Ascending aorta (tissue), 2 donors: ENCODE measurements at regions of chr9 and their contacts with region 1.

Region 1: DNA sequence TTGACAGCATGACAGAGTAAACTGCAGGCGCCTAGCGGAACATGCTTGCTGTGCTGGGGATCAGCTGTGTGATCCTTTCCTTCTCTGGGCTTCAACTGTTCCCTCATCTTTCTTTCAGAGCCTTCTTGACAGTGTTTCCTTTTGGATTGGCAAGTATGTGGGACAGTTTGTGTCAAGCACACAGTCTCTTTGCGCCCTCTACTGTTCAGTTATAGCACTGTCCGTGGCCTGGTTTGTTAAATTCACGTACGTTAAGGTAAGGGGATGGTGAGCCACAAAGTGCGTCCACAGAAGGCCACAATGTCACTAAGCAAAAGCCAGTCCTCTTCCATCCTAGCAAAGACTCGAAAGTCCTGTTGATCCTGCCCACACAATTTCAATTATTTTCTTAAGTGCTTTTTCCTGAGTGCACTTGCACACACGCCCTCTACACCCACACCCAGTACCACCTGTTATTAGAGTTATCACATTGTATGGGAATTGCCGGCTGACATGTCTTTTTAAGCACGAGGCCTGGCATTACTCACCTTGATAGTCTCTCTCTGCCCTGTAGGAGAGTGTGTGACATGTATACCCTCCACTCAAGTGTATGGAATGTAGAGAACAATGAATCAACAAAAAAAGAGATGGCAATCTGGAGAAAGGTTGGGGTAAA is 22.5 kb upstream of the PTPN3 start:
- DNase-seq: peak in 1 of 2 donors; percentile 86
- H3K4me3 ChIP-seq: no peak overlapping the region
- H3K27ac ChIP-seq: no peak overlapping the region
- H3K4me1 ChIP-seq: peaks cover 0 to 3% of the 10 kb centered on the region in 2 donors
- H3K27me3 ChIP-seq: no peaks in the 10 kb centered on the region
- CTCF ChIP-seq: peak; percentile 85 to 93 (median 87)

Region 2: GRCh38 chr9:109244157-109245132 is 276.2 kb before region 1 on chr9:
- intact Hi-C with region 1: loop called (anchors 10 kb)
- DNase-seq: peak in 1 of 2 donors; percentile 84
- H3K4me3 ChIP-seq: no peak overlapping the region
- H3K27ac ChIP-seq: no peak overlapping the region
- H3K4me1 ChIP-seq: no peaks in the 10 kb centered on the region
- H3K27me3 ChIP-seq: no peaks in the 10 kb centered on the region
- CTCF ChIP-seq: peak; percentile 64 to 94 (median 93)

Region 3: GRCh38 chr9:109320742-109321448 is 199.7 kb before region 1 on chr9 and contains the start of gene EPB41L4B:
- intact Hi-C with region 1: no loop called
- DNase-seq: peak; percentile 18 to 91
- H3K4me3 ChIP-seq: peak within 1 kb of the TSS; percentile 64 to 68
- H3K27ac ChIP-seq: no peak within 1 kb of the TSS
- H3K4me1 ChIP-seq: peaks cover 2 to 3% of the 10 kb centered on the region in 2 donors
- H3K27me3 ChIP-seq: peaks cover 6% of the 10 kb centered on the region
- CTCF ChIP-seq: peak; percentile 89 to 96 (median 95)
- total RNA-seq, gene EPB41L4B: not detected

Region 4: DNA sequence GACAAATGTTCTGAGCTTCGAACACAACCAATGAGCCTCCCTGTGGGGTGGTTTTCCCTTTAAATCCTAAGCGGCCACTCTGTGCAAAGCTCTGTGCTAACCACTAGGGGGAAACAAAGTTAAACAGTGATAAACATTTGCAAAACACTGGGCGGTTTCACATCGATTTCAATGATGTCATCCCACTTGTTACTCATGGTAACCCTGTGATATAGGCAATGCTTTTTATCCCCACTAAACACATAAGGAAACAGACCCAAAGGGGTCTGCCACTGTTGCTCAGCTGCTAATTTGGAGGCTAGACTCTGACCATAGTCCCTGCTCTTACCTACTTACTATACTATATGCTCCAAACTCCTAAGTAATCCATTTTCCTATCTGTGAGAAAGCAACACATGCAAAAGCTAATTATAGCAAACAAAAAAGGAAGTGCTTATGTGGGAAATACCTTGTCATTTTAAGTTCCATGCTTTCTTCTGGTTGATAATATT is 79.8 kb before region 1 on chr9:
- intact Hi-C with region 1: loop called (anchors 1 kb)
- DNase-seq: peak in 1 of 2 donors; percentile 83
- H3K4me3 ChIP-seq: no peak overlapping the region
- H3K27ac ChIP-seq: no peak overlapping the region
- H3K4me1 ChIP-seq: peaks cover 0 to 6% of the 10 kb centered on the region in 2 donors
- H3K27me3 ChIP-seq: no peaks in the 10 kb centered on the region
- CTCF ChIP-seq: peak; percentile 75 to 83 (median 82)

Region 5: GRCh38 chr9:110808599-110808980 is 1288.0 kb after region 1 on chr9:
- intact Hi-C with region 1: no loop called
- DNase-seq: no peak
- H3K4me3 ChIP-seq: no peak overlapping the region
- H3K27ac ChIP-seq: no peak overlapping the region
- H3K4me1 ChIP-seq: no peaks in the 10 kb centered on the region
- H3K27me3 ChIP-seq: no peaks in the 10 kb centered on the region
- CTCF ChIP-seq: no peak